B cell (primary cell): ENCODE measurements at regions of chr10 and their contacts with region 1.

Region 1: GRCh38 chr10:62437696-62438095 is 63.5 kb downstream of the ZNF365 start:
- DNase-seq: peak; percentile 81
- ATAC-seq: peak; percentile 78
- H3K4me3 ChIP-seq: no peak overlapping the region
- H3K4me3 Mint-ChIP-seq: no peak overlapping the region
- H3K27ac ChIP-seq: no peak overlapping the region
- H3K27ac Mint-ChIP-seq: no peak overlapping the region
- H3K4me1 ChIP-seq: no peaks in the 10 kb centered on the region
- H3K4me1 Mint-ChIP-seq: peaks cover 3% of the 10 kb centered on the region
- H3K27me3 ChIP-seq: peaks cover 0 to 7% (median 2%) of the 10 kb centered on the region in 4 experiments
- H3K27me3 Mint-ChIP-seq: peaks cover 10% of the 10 kb centered on the region
- CTCF ChIP-seq: peak; percentile 93

Region 2: GRCh38 chr10:62038609-62039190 is 399.0 kb before region 1 on chr10:
- CTCF ChIA-PET with region 1: interaction called, 10 read pairs
- POLR2A ChIA-PET with region 1: interaction called, 8 read pairs
- intact Hi-C with region 1: no loop called
- DNase-seq: peak; percentile 85
- ATAC-seq: peak; percentile 63
- H3K4me3 ChIP-seq: peak overlapping the region in 3 of 5 experiments; percentile 19 to 50 (median 27)
- H3K4me3 Mint-ChIP-seq: peak overlapping the region; percentile 74
- H3K27ac ChIP-seq: peak overlapping the region; percentile 59 to 84
- H3K27ac Mint-ChIP-seq: peak overlapping the region; percentile 87
- H3K4me1 ChIP-seq: peaks cover 74 to 81% of the 10 kb centered on the region in 2 donors
- H3K4me1 Mint-ChIP-seq: peaks cover 83% of the 10 kb centered on the region
- H3K27me3 ChIP-seq: no peaks in the 10 kb centered on the region
- H3K27me3 Mint-ChIP-seq: no peaks in the 10 kb centered on the region
- CTCF ChIP-seq: peak; percentile 89

Region 3: DNA sequence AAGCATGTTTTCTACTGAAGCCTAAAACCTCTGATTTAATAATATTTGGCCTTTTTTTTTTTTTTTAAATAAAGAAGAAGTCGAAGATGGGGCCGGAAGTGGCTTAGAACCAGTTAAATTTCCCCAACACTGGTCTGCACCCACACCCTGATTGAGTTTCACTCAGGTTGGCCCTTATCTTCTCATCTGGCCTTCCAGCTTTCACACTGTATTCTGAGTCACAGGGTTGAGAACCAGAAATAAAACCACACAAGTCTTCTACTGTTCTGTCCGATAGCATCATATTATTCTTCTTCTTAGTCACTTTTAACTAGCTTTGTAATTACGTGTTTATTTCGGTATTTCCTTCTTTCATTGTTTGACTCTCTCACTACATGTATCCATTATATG is 53.6 kb before region 1 on chr10:
- CTCF ChIA-PET with region 1: no interaction called
- POLR2A ChIA-PET with region 1: no interaction called
- intact Hi-C with region 1: no loop called
- DNase-seq: no peak
- ATAC-seq: no peak
- H3K4me3 ChIP-seq: no peak overlapping the region
- H3K4me3 Mint-ChIP-seq: no peak overlapping the region
- H3K27ac ChIP-seq: no peak overlapping the region
- H3K27ac Mint-ChIP-seq: no peak overlapping the region
- H3K4me1 ChIP-seq: no peaks in the 10 kb centered on the region
- H3K4me1 Mint-ChIP-seq: no peaks in the 10 kb centered on the region
- H3K27me3 ChIP-seq: peaks cover 0 to 5% (median 2%) of the 10 kb centered on the region in 4 experiments
- H3K27me3 Mint-ChIP-seq: peaks cover 4% of the 10 kb centered on the region
- CTCF ChIP-seq: no peak

Region 4: GRCh38 chr10:62492012-62492869 is 54.5 kb after region 1 on chr10:
- CTCF ChIA-PET with region 1: interaction called, 25 read pairs
- POLR2A ChIA-PET with region 1: interaction called, 3 read pairs
- intact Hi-C with region 1: loop called (anchors 2 kb)
- DNase-seq: peak; percentile 65
- ATAC-seq: peak; percentile 53
- H3K4me3 ChIP-seq: no peak overlapping the region
- H3K4me3 Mint-ChIP-seq: no peak overlapping the region
- H3K27ac ChIP-seq: no peak overlapping the region
- H3K27ac Mint-ChIP-seq: no peak overlapping the region
- H3K4me1 ChIP-seq: peaks cover 9 to 11% of the 10 kb centered on the region in 2 donors
- H3K4me1 Mint-ChIP-seq: peaks cover 26% of the 10 kb centered on the region
- H3K27me3 ChIP-seq: no peaks in the 10 kb centered on the region
- H3K27me3 Mint-ChIP-seq: no peaks in the 10 kb centered on the region
- CTCF ChIP-seq: peak; percentile 85

Region 5: GRCh38 chr10:62594093-62594520 is 156.4 kb after region 1 on chr10:
- CTCF ChIA-PET with region 1: interaction called, 58 read pairs
- POLR2A ChIA-PET with region 1: no interaction called
- intact Hi-C with region 1: loop called (anchors 1 kb)
- DNase-seq: peak; percentile 74
- ATAC-seq: peak; percentile 89
- H3K4me3 ChIP-seq: no peak overlapping the region
- H3K4me3 Mint-ChIP-seq: no peak overlapping the region
- H3K27ac ChIP-seq: no peak overlapping the region
- H3K27ac Mint-ChIP-seq: no peak overlapping the region
- H3K4me1 ChIP-seq: peaks cover 7 to 10% of the 10 kb centered on the region in 2 donors
- H3K4me1 Mint-ChIP-seq: peaks cover 7% of the 10 kb centered on the region
- H3K27me3 ChIP-seq: no peaks in the 10 kb centered on the region
- H3K27me3 Mint-ChIP-seq: no peaks in the 10 kb centered on the region
- CTCF ChIP-seq: peak; percentile 88

Region 6: DNA sequence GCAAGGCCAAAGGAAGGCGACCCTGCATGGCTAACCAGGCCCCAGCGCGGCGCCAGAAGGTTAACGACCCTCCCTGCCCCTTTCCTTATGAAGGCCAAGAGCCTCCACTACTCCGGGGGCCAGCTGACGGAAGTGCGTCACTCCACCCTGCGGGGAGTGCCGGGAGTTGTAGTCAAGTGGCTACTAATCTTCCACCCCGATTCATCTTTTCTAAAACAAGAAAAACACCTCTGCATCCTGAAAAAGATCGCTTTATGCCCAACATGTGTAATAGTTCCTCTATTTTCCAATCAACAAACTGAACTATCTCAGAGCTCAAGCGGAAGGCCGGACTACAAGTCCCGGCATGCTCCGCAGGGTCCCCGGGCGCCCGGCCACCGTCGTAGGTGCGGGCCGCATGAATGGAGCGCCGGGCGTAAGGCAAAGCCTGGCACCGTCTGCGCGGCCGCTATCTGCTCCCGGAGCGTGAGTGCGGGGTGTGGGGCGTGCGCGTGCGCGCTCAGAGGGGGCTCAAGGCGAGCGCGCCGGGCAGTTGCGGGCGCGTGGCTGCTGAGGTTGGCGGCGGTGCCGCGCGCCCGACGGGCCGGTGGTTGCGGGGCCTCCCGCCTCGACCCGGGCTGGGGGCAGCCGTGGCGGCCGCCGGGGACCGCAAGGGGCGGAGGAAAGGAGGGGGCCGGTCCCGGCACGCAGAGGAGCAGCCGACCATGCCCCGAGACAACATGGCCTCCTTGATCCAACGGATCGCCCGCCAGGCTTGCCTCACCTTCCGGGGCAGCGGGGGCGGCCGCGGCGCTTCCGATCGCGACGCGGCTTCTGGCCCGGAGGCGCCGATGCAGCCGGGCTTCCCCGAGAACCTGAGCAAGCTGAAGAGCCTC is 366.9 kb after region 1 on chr10 and contains the start of gene ADO:
- CTCF ChIA-PET with region 1: interaction called, 12 read pairs
- POLR2A ChIA-PET with region 1: no interaction called
- intact Hi-C with region 1: no loop called
- DNase-seq: peak; percentile 92
- ATAC-seq: peak; percentile 87
- H3K4me3 ChIP-seq: peak within 1 kb of the TSS; percentile 79 to 99 (median 92)
- H3K4me3 Mint-ChIP-seq: peak within 1 kb of the TSS; percentile 98
- H3K27ac ChIP-seq: peak within 1 kb of the TSS; percentile 96 to 98
- H3K27ac Mint-ChIP-seq: peak within 1 kb of the TSS; percentile 99
- H3K4me1 ChIP-seq: peaks cover 26 to 29% of the 10 kb centered on the region in 2 donors
- H3K4me1 Mint-ChIP-seq: peaks cover 44% of the 10 kb centered on the region
- H3K27me3 ChIP-seq: no peaks in the 10 kb centered on the region
- H3K27me3 Mint-ChIP-seq: no peaks in the 10 kb centered on the region
- CTCF ChIP-seq: no peak
- total RNA-seq, gene ADO: 18.4 and 19.1 TPM in 2 replicates

Region 7: GRCh38 chr10:63157845-63158624 is 720.3 kb after region 1 on chr10:
- CTCF ChIA-PET with region 1: interaction called, 83 read pairs
- POLR2A ChIA-PET with region 1: no interaction called
- intact Hi-C with region 1: loop called (anchors 1 kb)
- DNase-seq: peak; percentile 85
- ATAC-seq: peak; percentile 68
- H3K4me3 ChIP-seq: no peak overlapping the region
- H3K4me3 Mint-ChIP-seq: no peak overlapping the region
- H3K27ac ChIP-seq: no peak overlapping the region
- H3K27ac Mint-ChIP-seq: no peak overlapping the region
- H3K4me1 ChIP-seq: no peaks in the 10 kb centered on the region
- H3K4me1 Mint-ChIP-seq: peaks cover 9% of the 10 kb centered on the region
- H3K27me3 ChIP-seq: no peaks in the 10 kb centered on the region
- H3K27me3 Mint-ChIP-seq: no peaks in the 10 kb centered on the region
- CTCF ChIP-seq: peak; percentile 90